Activated T-helper 1 cell treated with anti-CD3 and anti-CD28 coated beads, Interleukin-12 subunit alpha, Interleukin-12 subunit beta, Interleukin-2, Interleukin-4 antibody, amounts not matched to agents 30 ng/mL and 10 ng/mL and 1 ng/mL, durations not matched to agents 14 hours and 24 hours and 36 hours (primary cell): ENCODE measurements at regions of chr6 and their contacts with region 1.

Region 1: DNA sequence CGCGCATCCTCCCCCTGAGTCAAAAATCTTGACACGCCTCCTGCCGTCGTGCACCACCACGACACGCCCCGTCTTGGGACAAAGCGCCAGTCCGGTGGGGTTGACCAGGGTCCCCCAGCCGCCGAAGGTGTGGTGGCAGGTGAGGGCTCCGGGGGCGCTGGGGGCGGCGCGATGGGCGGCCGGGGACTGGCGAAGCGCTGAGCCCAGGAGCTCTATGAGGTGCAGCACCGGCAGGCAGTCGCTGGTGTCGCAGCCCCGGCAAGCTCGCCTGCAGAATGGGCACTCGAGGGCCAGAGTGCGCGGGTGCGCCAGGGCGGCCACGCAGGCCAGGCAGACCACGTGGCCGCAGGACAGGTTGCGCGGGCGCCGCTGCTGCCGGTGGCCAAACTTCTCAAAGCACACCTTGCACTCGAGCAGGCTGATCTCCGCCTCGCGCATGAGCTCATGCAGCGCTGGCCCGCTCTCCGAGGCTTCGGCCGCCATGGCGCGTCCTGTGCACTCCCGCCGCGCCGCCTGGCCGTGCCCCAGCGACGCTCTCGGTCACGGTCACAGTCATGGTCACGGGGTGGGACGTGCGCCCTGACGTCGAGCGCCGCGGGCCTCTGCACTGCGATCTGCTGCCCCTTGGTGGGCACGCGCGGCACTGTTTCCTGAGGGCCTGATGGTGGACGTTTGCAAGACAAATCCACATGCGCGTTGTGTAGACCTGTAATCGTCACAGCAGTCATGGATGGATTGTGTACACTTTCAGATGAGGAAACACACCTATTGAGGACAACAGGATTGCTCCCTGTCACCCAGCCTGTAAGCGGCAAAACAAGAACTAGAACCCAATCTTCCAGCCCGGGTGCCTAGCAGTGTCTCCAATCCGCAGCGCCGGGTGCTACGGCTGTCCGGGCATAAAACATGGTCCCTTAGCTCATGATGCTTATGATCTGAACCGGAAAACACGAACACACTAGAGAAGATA is at the start of gene NHLRC1:
- DNase-seq: peak; percentile 62
- H3K4me3 Mint-ChIP-seq: peak within 1 kb of the TSS; percentile 72
- H3K27ac Mint-ChIP-seq: peak within 1 kb of the TSS; percentile 62
- H3K4me1 Mint-ChIP-seq: peaks cover 8% of the 10 kb centered on the region
- H3K27me3 Mint-ChIP-seq: peaks cover 54% of the 10 kb centered on the region
- total RNA-seq, gene NHLRC1: 0.23 and 0.24 TPM in 2 replicates

Region 2: DNA sequence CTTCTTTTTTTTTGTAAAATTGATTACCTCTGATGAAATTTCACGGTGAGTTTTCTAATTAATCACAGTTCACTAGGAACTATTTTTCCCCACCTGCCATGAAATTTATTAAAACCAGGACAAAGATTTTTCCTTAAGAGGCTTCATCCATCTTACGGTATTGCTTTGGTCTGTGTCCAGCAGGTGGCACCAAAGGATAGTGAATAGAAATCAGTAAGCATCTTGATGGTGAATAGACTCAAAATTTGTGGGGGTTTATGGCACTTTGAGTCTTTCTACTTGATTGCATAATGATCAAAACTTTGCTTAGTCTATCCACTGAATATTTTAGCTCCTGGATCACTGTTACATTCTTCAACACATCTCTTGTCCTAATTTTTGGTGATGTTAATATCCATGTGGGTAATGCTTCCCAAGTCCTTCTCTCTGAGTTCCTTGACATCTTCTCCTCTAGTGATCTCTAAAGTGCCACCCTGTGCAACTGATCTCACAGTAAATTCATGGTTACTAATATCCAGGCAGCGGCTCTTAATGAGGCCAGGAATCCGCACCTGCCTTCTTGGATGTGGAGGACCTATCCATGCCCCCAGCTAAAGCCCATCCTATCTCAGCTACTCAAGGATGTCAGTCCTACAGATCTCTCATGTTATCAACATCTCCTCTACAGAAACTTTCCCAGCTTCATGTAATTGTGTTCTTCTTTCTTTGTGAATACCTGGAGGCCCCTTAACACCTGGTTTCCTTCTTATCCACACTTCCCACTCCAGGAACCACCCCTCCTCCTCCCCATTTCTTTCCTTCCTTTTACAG is 966.1 kb before region 1 on chr6:
- intact Hi-C with region 1: loop called (anchors 2 kb)
- DNase-seq: peak; percentile 17
- H3K4me3 Mint-ChIP-seq: no peak overlapping the region
- H3K27ac Mint-ChIP-seq: no peak overlapping the region
- H3K4me1 Mint-ChIP-seq: no peaks in the 10 kb centered on the region
- H3K27me3 Mint-ChIP-seq: no peaks in the 10 kb centered on the region

Region 3: GRCh38 chr6:17820055-17820454 is 302.4 kb before region 1 on chr6:
- intact Hi-C with region 1: loop called (anchors 5 kb)
- DNase-seq: no peak
- H3K4me3 Mint-ChIP-seq: no peak overlapping the region
- H3K27ac Mint-ChIP-seq: no peak overlapping the region
- H3K4me1 Mint-ChIP-seq: no peaks in the 10 kb centered on the region
- H3K27me3 Mint-ChIP-seq: peaks cover 5% of the 10 kb centered on the region

Region 4: DNA sequence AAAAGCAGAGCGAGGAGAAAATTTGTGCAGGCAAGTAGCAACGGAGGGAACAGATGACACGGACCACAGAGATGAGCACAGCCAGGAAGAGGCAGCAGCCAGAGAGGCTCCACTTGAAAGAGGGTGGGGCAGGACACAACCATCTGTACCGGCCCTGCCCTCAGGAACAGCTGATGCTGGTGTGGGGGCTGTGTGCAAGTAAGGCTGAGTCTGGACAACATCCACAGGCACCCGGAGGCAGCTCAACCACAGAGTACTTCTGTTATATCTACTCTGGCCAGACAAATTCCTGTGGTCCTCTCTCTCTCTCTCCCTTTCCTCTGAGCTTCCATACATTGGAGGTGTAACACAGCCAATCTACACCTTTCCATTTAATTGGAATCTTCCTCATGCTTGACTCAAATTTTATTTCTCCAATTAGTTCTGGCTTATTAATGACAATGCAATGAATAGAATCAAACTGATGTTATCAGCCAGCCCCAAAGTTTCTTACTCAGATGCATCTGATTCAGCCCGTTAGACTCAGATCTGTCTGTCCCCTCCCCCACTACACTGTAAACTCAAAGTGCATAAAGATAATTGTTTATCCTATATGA is 159.9 kb before region 1 on chr6:
- intact Hi-C with region 1: no loop called
- DNase-seq: no peak
- H3K4me3 Mint-ChIP-seq: no peak overlapping the region
- H3K27ac Mint-ChIP-seq: no peak overlapping the region
- H3K4me1 Mint-ChIP-seq: peaks cover 5% of the 10 kb centered on the region
- H3K27me3 Mint-ChIP-seq: peaks cover 7% of the 10 kb centered on the region

Region 5: GRCh38 chr6:18155150-18155863 is 32.9 kb after region 1 on chr6 and contains the start of gene KDM1B:
- intact Hi-C with region 1: loop called (anchors 2 kb)
- DNase-seq: peak; percentile 99
- H3K4me3 Mint-ChIP-seq: peak within 1 kb of the TSS; percentile 92
- H3K27ac Mint-ChIP-seq: peak within 1 kb of the TSS; percentile 92
- H3K4me1 Mint-ChIP-seq: peaks cover 24% of the 10 kb centered on the region
- H3K27me3 Mint-ChIP-seq: peaks cover 9% of the 10 kb centered on the region
- total RNA-seq, gene KDM1B: 7.1 and 7.2 TPM in 2 replicates

Region 6: GRCh38 chr6:18503593-18504231 is 381.3 kb after region 1 on chr6:
- intact Hi-C with region 1: loop called (anchors 10 kb)
- DNase-seq: no peak
- H3K4me3 Mint-ChIP-seq: no peak overlapping the region
- H3K27ac Mint-ChIP-seq: no peak overlapping the region
- H3K4me1 Mint-ChIP-seq: no peaks in the 10 kb centered on the region
- H3K27me3 Mint-ChIP-seq: peaks cover 6% of the 10 kb centered on the region